Activated CD4-positive, alpha-beta memory T cell treated with anti-CD3 and anti-CD28 coated beads for 36 hours (primary cell): ENCODE measurements at regions of chr2 and their contacts with region 1.

Region 1: GRCh38 chr2:144516981-144517865 is 2.7 kb downstream of the ZEB2 start:
- DNase-seq: peak; percentile 68
- H3K4me3 Mint-ChIP-seq: no peak overlapping the region
- H3K27ac Mint-ChIP-seq: peak overlapping the region; percentile 97
- H3K4me1 Mint-ChIP-seq: peaks cover 17% of the 10 kb centered on the region
- H3K27me3 Mint-ChIP-seq: peaks cover 46% of the 10 kb centered on the region

Region 2: GRCh38 chr2:143128681-143129580 is 1388.3 kb before region 1 on chr2 and contains the start of gene ARHGAP15:
- CTCF ChIA-PET with region 1: no interaction called
- POLR2A ChIA-PET with region 1: no interaction called
- intact Hi-C with region 1: loop called (anchors 10 kb)
- DNase-seq: peak; percentile 85
- H3K4me3 Mint-ChIP-seq: peak within 1 kb of the TSS; percentile 83
- H3K27ac Mint-ChIP-seq: peak within 1 kb of the TSS; percentile 100
- H3K4me1 Mint-ChIP-seq: peaks cover 29% of the 10 kb centered on the region
- H3K27me3 Mint-ChIP-seq: no peaks in the 10 kb centered on the region
- total RNA-seq, gene ARHGAP15: 70.2 to 71.2 TPM

Region 3: DNA sequence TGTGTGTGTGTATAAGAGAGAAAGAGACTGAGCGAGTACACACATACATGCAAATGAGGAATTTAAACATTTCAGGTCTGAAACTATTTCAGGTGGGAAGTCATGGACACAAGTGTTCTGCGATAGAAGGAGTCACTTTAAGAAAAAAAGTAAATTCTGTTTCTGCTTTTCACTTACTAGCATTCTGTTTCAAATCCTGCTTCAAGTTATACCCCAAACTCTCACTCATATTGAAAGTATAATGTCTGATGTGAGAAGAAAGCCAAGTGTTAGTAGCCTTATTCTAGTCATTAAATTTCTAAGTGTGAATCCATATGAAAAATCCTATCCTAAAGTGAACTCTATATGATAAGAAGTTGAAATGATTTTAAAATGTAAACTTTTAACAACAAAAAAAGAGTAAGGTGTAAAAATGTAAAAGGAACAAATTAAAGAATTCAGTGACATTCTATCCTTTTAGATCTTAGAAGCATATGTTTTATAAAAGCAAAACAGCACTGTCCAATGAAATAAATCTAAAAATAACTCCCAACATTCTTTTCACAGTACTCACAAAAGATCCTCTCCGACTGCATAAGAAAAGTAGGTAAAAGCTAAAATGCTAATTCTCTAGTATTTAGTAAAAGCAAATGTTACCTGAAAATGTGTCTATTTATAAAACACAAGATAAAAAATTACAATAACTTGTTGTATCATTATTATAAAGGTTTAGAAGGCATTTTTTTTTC is 567.9 kb before region 1 on chr2:
- CTCF ChIA-PET with region 1: no interaction called
- POLR2A ChIA-PET with region 1: no interaction called
- intact Hi-C with region 1: loop called (anchors 5 kb)
- DNase-seq: no peak
- H3K4me3 Mint-ChIP-seq: no peak overlapping the region
- H3K27ac Mint-ChIP-seq: no peak overlapping the region
- H3K4me1 Mint-ChIP-seq: peaks cover 2% of the 10 kb centered on the region
- H3K27me3 Mint-ChIP-seq: no peaks in the 10 kb centered on the region

Region 4: DNA sequence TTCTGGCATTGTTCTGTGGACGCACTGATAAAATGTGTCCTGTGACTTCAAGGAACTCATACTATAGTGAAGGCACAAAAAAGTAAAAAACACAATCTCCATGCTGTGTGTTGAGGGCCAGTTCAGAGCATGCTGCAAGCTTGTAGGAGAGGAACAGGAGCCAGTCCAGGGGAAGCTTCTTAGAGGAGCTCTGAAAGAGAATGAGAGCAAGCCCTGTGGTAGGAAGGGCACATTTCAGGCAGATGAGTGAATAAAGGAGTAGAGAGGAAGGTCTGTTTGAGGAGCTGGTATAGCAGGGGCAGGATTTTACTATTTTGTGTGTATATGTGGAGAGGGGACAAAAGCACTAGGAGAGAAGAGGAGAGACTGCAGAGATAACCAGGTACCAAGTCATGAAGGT is 475.6 kb before region 1 on chr2:
- CTCF ChIA-PET with region 1: no interaction called
- POLR2A ChIA-PET with region 1: no interaction called
- intact Hi-C with region 1: no loop called
- DNase-seq: no peak
- H3K4me3 Mint-ChIP-seq: no peak overlapping the region
- H3K27ac Mint-ChIP-seq: no peak overlapping the region
- H3K4me1 Mint-ChIP-seq: no peaks in the 10 kb centered on the region
- H3K27me3 Mint-ChIP-seq: no peaks in the 10 kb centered on the region

Region 5: GRCh38 chr2:144183727-144184126 is 333.5 kb before region 1 on chr2:
- CTCF ChIA-PET with region 1: no interaction called
- POLR2A ChIA-PET with region 1: no interaction called
- intact Hi-C with region 1: loop called (anchors 5 kb)
- DNase-seq: peak; percentile 89
- H3K4me3 Mint-ChIP-seq: peak overlapping the region; percentile 52
- H3K27ac Mint-ChIP-seq: peak overlapping the region; percentile 87
- H3K4me1 Mint-ChIP-seq: peaks cover 37% of the 10 kb centered on the region
- H3K27me3 Mint-ChIP-seq: no peaks in the 10 kb centered on the region

Region 6: GRCh38 chr2:144357623-144358373 is 159.4 kb before region 1 on chr2:
- CTCF ChIA-PET with region 1: no interaction called
- POLR2A ChIA-PET with region 1: no interaction called
- intact Hi-C with region 1: loop called (anchors 1 kb)
- DNase-seq: peak; percentile 61
- H3K4me3 Mint-ChIP-seq: peak overlapping the region; percentile 12
- H3K27ac Mint-ChIP-seq: peak overlapping the region; percentile 88
- H3K4me1 Mint-ChIP-seq: peaks cover 26% of the 10 kb centered on the region
- H3K27me3 Mint-ChIP-seq: no peaks in the 10 kb centered on the region

Region 7: GRCh38 chr2:144456680-144457079 is 60.5 kb before region 1 on chr2:
- CTCF ChIA-PET with region 1: no interaction called
- POLR2A ChIA-PET with region 1: no interaction called
- intact Hi-C with region 1: loop called (anchors 2 kb)
- DNase-seq: peak; percentile 31
- H3K4me3 Mint-ChIP-seq: no peak overlapping the region
- H3K27ac Mint-ChIP-seq: no peak overlapping the region
- H3K4me1 Mint-ChIP-seq: peaks cover 52% of the 10 kb centered on the region
- H3K27me3 Mint-ChIP-seq: peaks cover 13% of the 10 kb centered on the region

Region 8: GRCh38 chr2:144579556-144579955 is 62.3 kb after region 1 on chr2:
- CTCF ChIA-PET with region 1: no interaction called
- POLR2A ChIA-PET with region 1: no interaction called
- intact Hi-C with region 1: no loop called
- DNase-seq: no peak
- H3K4me3 Mint-ChIP-seq: no peak overlapping the region
- H3K27ac Mint-ChIP-seq: no peak overlapping the region
- H3K4me1 Mint-ChIP-seq: peaks cover 9% of the 10 kb centered on the region
- H3K27me3 Mint-ChIP-seq: peaks cover 14% of the 10 kb centered on the region

Region 9: DNA sequence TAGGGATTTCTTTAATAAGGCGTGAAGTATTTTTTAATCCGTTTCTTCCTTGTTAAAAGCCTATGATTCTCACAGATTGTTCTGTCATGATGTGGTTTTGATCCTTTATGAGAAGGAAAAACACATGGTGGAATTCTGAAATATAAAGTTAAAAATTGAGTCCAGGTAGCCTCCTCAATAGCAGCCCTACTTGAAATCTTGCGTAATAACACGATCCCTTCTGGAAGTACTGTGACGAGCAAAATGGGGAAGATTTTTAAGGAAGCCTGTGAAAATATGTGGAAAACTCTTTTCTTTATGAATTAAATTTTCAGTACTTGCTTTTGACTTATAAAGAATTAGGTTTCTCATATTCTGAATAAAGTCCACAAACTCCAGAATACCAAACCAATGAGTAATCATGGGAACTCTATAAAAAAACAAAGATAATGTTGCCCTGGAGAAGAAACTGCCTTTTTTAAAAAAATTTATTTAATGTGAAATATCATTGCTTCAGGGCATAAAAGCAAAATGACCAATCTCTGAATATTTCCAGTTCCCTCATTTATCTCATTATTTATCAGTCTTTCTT is 479.1 kb after region 1 on chr2:
- CTCF ChIA-PET with region 1: no interaction called
- POLR2A ChIA-PET with region 1: no interaction called
- intact Hi-C with region 1: no loop called
- DNase-seq: no peak
- H3K4me3 Mint-ChIP-seq: no peak overlapping the region
- H3K27ac Mint-ChIP-seq: no peak overlapping the region
- H3K4me1 Mint-ChIP-seq: no peaks in the 10 kb centered on the region
- H3K27me3 Mint-ChIP-seq: peaks cover under 1% of the 10 kb centered on the region